Activated CD4-positive, alpha-beta T cell treated with anti-CD3 and anti-CD28 coated beads for 36 hours (primary cell): ENCODE measurements at regions of chr7 and their contacts with region 1.

Region 1: DNA sequence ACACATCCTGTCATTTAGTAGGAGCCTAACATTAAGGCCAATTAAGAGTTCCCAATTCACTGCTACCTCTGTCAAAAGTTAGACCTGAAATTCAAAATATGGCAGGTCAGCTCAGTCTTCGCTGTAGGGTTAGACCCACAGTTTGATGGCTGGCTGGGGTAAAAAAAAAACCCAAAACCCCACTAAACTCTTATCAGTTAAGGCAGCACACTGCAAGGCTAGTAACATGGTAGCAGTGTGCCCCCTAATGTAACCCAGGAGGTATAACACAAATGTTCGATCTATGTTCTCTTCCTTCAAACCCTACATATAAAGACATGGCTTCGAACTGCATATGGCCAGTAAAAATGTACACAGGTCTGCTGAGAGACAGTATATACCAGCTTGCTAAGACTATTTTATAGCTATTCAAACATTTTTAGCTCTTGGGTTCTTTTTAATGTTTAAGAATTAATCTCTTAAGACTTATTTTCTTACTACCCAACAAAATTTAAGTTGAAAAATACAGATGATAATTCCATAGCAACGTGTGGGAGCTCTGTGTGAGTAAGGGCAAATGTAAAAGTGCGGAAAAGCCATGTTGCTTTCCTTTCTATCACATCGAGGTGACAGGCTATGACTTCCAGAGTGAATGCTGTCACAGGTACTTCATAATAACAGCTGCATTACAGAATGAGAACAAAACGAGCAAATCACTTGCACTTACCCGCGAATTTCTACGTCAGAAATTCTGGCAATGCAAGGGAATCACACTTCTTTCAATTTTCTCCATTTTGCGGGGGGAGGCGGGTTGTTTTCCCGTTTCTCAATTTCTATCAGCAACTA is 168.4 kb upstream of the IMMP2L start:
- DNase-seq: peak; percentile 13
- ATAC-seq: peak; percentile 72
- H3K4me3 Mint-ChIP-seq: no peak overlapping the region
- H3K27ac Mint-ChIP-seq: no peak overlapping the region
- H3K4me1 Mint-ChIP-seq: no peaks in the 10 kb centered on the region
- H3K27me3 Mint-ChIP-seq: peaks cover 2% of the 10 kb centered on the region

Region 2: GRCh38 chr7:109844362-109844761 is 1886.3 kb before region 1 on chr7:
- CTCF ChIA-PET with region 1: no interaction called
- POLR2A ChIA-PET with region 1: no interaction called
- intact Hi-C with region 1: loop called (anchors 1 to 2 kb)
- DNase-seq: no peak
- ATAC-seq: no peak
- H3K4me3 Mint-ChIP-seq: no peak overlapping the region
- H3K27ac Mint-ChIP-seq: no peak overlapping the region
- H3K4me1 Mint-ChIP-seq: no peaks in the 10 kb centered on the region
- H3K27me3 Mint-ChIP-seq: no peaks in the 10 kb centered on the region

Region 3: GRCh38 chr7:111089822-111090426 is 640.8 kb before region 1 on chr7:
- CTCF ChIA-PET with region 1: no interaction called
- POLR2A ChIA-PET with region 1: no interaction called
- intact Hi-C with region 1: loop called (anchors 2 to 5 kb)
- DNase-seq: no peak
- ATAC-seq: no peak
- H3K4me3 Mint-ChIP-seq: no peak overlapping the region
- H3K27ac Mint-ChIP-seq: peak overlapping the region; percentile 80
- H3K4me1 Mint-ChIP-seq: peaks cover 86% of the 10 kb centered on the region
- H3K27me3 Mint-ChIP-seq: no peaks in the 10 kb centered on the region